Activated B cell treated with CpG ODN at 0.5 μM for 24 hours (primary cell): ENCODE measurements at regions of chr15 and their contacts with region 1.

Region 1: GRCh38 chr15:85840065-85840801 is 45.5 kb upstream of the KLHL25 start:
- DNase-seq: peak; percentile 75
- ATAC-seq: peak; percentile 97
- H3K4me3 Mint-ChIP-seq: peak overlapping the region; percentile 71
- H3K27ac Mint-ChIP-seq: no peak overlapping the region
- H3K4me1 Mint-ChIP-seq: peaks cover 5% of the 10 kb centered on the region
- H3K27me3 Mint-ChIP-seq: peaks cover 11% of the 10 kb centered on the region
- CTCF ChIP-seq: peak; percentile 64

Region 2: DNA sequence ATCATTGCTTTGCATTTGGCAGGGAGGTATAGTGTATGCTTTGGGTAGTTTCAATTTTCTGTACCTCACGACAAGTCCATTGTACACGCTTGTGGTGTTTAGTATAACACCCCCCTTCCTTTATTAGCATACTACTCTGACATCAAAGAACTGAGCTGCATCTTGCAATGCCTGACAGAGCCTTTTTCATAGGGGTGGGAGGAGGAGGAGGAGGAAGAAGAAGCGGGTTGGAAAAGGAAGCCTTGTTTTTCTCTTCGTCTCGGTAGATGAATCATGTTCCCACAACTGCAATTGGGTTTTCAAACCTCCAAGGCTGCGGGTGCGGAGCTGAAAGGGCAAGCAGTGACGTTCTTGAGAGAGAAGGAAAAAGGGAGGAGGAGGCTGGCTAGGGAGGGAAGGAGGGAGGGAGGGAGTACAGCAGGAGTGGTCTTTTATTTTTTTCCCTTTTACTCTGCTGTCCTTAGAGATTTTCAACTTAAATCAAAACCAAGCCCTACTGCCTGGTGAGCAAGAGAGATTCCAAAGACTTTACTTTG is 221.2 kb before region 1 on chr15:
- CTCF ChIA-PET with region 1: no interaction called
- POLR2A ChIA-PET with region 1: no interaction called
- intact Hi-C with region 1: loop called (anchors 2 kb)
- DNase-seq: no peak
- ATAC-seq: peak; percentile 33
- H3K4me3 Mint-ChIP-seq: no peak overlapping the region
- H3K27ac Mint-ChIP-seq: no peak overlapping the region
- H3K4me1 Mint-ChIP-seq: peaks cover 33% of the 10 kb centered on the region
- H3K27me3 Mint-ChIP-seq: no peaks in the 10 kb centered on the region
- CTCF ChIP-seq: no peak

Region 3: DNA sequence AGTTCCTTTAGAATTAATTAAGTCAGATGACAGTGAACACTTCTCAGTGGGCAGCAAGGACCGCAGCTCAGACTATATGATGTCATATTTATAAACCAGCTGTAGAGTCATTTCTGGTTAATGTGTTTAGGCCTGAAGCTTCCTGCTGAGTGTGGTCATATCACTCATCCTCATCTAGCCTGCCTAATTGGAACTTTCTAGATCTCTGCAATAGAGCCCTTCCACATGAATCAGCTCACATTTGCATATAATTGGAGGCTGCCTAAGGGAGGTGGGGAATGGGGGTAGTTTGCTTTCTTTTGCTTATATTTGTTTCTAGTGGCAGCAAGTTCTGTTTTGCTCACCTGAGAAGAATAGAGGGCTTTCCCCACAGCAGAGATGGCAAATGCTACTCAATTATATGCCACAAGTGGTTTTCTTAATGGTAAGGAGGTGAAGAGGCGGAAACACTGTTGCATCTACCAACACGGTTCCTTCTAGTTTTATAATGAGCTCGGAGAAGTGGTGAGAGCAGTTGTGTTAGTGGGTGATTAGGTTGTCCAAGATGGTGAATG is 193.6 kb before region 1 on chr15:
- CTCF ChIA-PET with region 1: no interaction called
- POLR2A ChIA-PET with region 1: no interaction called
- intact Hi-C with region 1: no loop called
- DNase-seq: no peak
- ATAC-seq: peak; percentile 42
- H3K4me3 Mint-ChIP-seq: no peak overlapping the region
- H3K27ac Mint-ChIP-seq: no peak overlapping the region
- H3K4me1 Mint-ChIP-seq: peaks cover 11% of the 10 kb centered on the region
- H3K27me3 Mint-ChIP-seq: no peaks in the 10 kb centered on the region
- CTCF ChIP-seq: no peak

Region 4: DNA sequence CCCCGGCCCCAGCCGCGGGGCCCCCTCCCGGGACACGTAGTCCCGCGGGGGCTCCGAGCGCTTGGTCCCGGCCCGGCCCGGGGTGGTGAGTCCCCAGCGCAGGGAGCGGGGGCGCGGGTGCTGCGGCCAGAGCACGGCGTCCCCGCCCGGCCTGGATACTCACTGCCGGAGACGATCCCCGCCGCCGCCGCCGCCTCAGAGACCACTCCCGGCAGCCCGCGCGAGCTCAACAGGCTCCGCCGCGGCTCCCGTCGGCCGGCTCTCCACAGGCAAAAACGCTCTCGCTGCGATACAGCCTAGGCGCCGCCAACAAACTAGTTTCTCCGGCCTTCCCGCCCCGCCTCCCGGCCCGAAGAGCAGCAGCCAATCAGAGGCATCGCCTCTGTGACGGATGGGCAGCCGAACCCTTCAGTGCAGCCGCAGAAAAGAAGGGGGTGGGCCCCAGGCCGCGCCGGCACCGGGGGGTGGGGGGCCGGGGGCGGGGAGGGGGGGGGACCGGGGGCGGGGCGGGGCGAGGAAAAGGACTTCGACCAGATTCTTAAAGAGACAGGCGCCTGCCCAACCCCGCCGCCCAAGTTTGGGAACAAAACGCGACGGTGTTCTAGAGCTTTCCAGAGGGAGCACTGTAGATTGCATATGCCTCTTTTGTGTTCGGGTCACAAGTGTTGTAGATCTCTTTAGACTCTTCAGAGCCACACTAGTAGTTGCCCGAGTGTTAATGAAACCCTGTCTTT is 45.5 kb before region 1 on chr15 and contains the start of gene KLHL25:
- CTCF ChIA-PET with region 1: no interaction called
- POLR2A ChIA-PET with region 1: no interaction called
- intact Hi-C with region 1: loop called (anchors 2 kb)
- DNase-seq: peak; percentile 84
- ATAC-seq: peak; percentile 98
- H3K4me3 Mint-ChIP-seq: peak within 1 kb of the TSS; percentile 88
- H3K27ac Mint-ChIP-seq: peak within 1 kb of the TSS; percentile 66
- H3K4me1 Mint-ChIP-seq: peaks cover 19% of the 10 kb centered on the region
- H3K27me3 Mint-ChIP-seq: peaks cover 2% of the 10 kb centered on the region
- CTCF ChIP-seq: no peak
- total RNA-seq, gene KLHL25: 2.0 and 2.1 TPM in 2 replicates

Region 5: DNA sequence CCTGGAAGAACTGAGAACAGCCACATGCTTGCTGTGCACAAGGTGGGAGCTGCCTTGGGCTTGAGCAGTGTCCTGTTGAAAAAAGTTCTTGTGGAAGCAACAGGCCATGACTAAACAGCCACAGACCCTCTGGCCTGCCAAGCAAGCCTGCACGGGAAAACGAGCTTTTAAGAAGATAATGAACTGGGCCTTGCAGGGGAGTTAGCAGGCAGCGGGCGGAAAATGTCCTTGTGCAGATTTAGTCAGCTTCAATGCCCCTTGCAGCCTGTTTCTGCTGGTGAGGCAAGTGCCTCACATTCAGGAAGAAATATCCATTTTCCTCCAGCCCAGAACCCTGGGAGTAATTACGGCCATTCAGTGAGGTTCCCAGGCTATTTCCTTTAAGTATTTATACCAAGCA is 80.7 kb after region 1 on chr15:
- CTCF ChIA-PET with region 1: no interaction called
- POLR2A ChIA-PET with region 1: no interaction called
- intact Hi-C with region 1: no loop called
- DNase-seq: no peak
- ATAC-seq: no peak
- H3K4me3 Mint-ChIP-seq: no peak overlapping the region
- H3K27ac Mint-ChIP-seq: no peak overlapping the region
- H3K4me1 Mint-ChIP-seq: no peaks in the 10 kb centered on the region
- H3K27me3 Mint-ChIP-seq: peaks cover 4% of the 10 kb centered on the region
- CTCF ChIP-seq: no peak